Activated CD4-positive, alpha-beta T cell treated with anti-CD3 and anti-CD28 coated beads for 36 hours (primary cell): ENCODE measurements at regions of chr7 and their contacts with region 1.

Region 1: DNA sequence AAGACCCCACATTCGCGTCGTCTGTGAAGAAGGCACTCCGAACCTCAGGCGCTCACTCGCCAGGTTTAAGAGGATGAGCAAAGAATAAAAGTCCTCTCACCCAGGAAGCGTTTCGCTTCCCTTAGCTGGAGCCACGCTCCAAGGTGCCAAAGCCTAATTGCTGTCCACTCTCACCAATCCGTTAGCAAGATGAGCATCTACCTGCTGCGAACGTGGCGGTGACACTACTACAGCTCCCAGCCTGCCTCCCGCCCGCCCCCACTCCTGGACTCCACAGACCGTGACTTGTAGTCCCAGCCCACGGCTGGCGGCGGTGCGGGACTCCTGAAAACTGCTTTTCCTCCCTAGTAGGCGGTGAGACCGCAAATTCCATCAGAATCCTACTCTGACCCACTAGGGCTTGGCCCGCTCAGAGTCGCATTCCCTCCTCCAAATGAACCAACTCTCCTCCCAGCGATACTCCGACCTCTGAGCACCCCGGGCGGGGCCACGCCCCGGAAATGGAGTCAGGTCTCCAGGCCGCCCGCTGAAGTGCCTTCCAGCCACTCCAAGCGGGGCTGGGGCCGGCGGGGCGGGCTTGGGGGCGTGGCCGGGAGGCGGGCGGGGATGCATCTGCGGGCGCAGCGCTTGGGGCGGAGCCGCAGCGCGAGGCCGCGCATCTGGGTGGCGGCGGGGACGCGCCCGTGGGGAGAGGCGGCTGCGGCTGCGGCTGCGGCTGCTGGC is 521 bp upstream of the PTPN12 start:
- DNase-seq: peak; percentile 99
- ATAC-seq: peak; percentile 96
- H3K4me3 Mint-ChIP-seq: peak overlapping the region; percentile 95
- H3K27ac Mint-ChIP-seq: peak overlapping the region; percentile 91
- H3K4me1 Mint-ChIP-seq: peaks cover 9% of the 10 kb centered on the region
- H3K27me3 Mint-ChIP-seq: no peaks in the 10 kb centered on the region

Region 2: GRCh38 chr7:77331938-77332695 is 204.5 kb before region 1 on chr7:
- CTCF ChIA-PET with region 1: no interaction called
- POLR2A ChIA-PET with region 1: no interaction called
- intact Hi-C with region 1: loop called in 1 of 2 experiments (anchors 2 kb)
- DNase-seq: peak; percentile 76
- ATAC-seq: peak; percentile 56
- H3K4me3 Mint-ChIP-seq: no peak overlapping the region
- H3K27ac Mint-ChIP-seq: no peak overlapping the region
- H3K4me1 Mint-ChIP-seq: peaks cover 44% of the 10 kb centered on the region
- H3K27me3 Mint-ChIP-seq: no peaks in the 10 kb centered on the region

Region 3: DNA sequence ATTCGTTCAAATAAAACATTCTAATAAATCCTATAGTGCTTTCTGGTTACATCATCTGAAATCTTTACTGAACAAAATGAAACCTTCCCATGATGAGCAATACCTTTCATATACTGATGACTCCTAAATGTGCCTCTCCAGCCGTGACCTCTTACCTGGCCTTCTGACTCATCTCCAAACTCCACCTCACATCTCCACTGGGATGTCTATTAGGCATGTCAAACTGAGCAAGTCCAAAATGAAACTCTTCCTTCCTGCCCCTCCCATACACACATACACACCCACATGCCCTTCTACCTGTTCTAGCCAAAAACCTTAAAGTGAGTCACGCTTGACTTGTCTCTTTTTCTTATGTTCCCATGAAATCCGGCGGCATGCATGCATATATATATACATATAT is 143.3 kb before region 1 on chr7:
- CTCF ChIA-PET with region 1: no interaction called
- POLR2A ChIA-PET with region 1: no interaction called
- intact Hi-C with region 1: loop called in 1 of 2 experiments (anchors 5 kb)
- DNase-seq: peak; percentile 72
- ATAC-seq: peak; percentile 98
- H3K4me3 Mint-ChIP-seq: no peak overlapping the region
- H3K27ac Mint-ChIP-seq: no peak overlapping the region
- H3K4me1 Mint-ChIP-seq: peaks cover 26% of the 10 kb centered on the region
- H3K27me3 Mint-ChIP-seq: no peaks in the 10 kb centered on the region

Region 4: GRCh38 chr7:77425101-77426051 is 111.2 kb before region 1 on chr7:
- CTCF ChIA-PET with region 1: no interaction called
- POLR2A ChIA-PET with region 1: no interaction called
- intact Hi-C with region 1: no loop called
- DNase-seq: no peak
- ATAC-seq: no peak
- H3K4me3 Mint-ChIP-seq: no peak overlapping the region
- H3K27ac Mint-ChIP-seq: no peak overlapping the region
- H3K4me1 Mint-ChIP-seq: peaks cover 27% of the 10 kb centered on the region
- H3K27me3 Mint-ChIP-seq: peaks cover 7% of the 10 kb centered on the region

Region 5: GRCh38 chr7:77460057-77460486 is 76.5 kb before region 1 on chr7:
- CTCF ChIA-PET with region 1: no interaction called
- POLR2A ChIA-PET with region 1: no interaction called
- intact Hi-C with region 1: no loop called
- DNase-seq: no peak
- ATAC-seq: no peak
- H3K4me3 Mint-ChIP-seq: no peak overlapping the region
- H3K27ac Mint-ChIP-seq: no peak overlapping the region
- H3K4me1 Mint-ChIP-seq: peaks cover 14% of the 10 kb centered on the region
- H3K27me3 Mint-ChIP-seq: no peaks in the 10 kb centered on the region

Region 6: DNA sequence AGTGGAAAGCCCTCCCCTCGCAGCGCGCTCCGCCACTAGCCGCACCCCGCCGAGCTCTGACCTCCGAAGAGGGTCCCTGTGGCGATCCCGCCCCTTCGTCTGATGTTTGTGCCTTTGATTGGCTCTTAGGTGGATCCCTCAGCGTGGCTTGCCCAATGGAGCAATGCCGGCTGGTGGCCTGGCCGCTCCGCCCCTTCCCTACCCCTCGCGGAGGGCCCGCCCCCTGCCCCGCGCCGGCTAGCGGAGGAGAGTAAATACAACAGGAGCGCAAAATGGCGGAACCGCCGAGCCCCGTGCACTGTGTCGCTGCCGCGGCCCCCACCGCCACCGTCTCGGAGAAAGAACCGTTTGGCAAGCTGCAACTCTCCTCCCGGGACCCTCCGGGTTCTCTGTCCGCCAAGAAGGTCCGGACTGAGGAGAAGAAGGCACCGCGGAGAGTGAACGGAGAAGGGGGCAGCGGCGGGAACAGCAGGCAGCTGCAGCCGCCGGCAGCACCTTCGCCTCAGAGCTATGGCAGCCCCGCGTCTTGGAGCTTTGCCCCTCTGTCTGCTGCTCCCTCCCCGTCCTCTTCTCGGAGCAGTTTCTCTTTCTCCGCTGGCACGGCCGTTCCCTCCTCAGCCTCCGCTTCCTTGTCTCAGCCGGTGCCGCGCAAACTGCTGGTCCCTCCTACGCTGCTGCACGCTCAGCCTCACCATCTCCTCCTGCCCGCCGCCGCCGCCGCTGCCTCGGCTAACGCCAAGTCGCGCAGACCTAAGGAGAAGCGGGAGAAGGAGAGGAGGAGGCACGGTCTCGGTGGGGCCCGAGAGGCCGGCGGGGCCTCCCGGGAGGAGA is 159.8 kb after region 1 on chr7 and contains the start of gene RSBN1L:
- CTCF ChIA-PET with region 1: no interaction called
- POLR2A ChIA-PET with region 1: no interaction called
- intact Hi-C with region 1: loop called (anchors 1 kb)
- DNase-seq: peak; percentile 99
- ATAC-seq: peak; percentile 98
- H3K4me3 Mint-ChIP-seq: peak within 1 kb of the TSS; percentile 99
- H3K27ac Mint-ChIP-seq: peak within 1 kb of the TSS; percentile 95
- H3K4me1 Mint-ChIP-seq: peaks cover 45% of the 10 kb centered on the region
- H3K27me3 Mint-ChIP-seq: no peaks in the 10 kb centered on the region
- total RNA-seq, gene RSBN1L: 21.0 to 26.3 TPM